ENCODE measurements at regions of chr11 and their contacts with region 1.

Region 1: DNA sequence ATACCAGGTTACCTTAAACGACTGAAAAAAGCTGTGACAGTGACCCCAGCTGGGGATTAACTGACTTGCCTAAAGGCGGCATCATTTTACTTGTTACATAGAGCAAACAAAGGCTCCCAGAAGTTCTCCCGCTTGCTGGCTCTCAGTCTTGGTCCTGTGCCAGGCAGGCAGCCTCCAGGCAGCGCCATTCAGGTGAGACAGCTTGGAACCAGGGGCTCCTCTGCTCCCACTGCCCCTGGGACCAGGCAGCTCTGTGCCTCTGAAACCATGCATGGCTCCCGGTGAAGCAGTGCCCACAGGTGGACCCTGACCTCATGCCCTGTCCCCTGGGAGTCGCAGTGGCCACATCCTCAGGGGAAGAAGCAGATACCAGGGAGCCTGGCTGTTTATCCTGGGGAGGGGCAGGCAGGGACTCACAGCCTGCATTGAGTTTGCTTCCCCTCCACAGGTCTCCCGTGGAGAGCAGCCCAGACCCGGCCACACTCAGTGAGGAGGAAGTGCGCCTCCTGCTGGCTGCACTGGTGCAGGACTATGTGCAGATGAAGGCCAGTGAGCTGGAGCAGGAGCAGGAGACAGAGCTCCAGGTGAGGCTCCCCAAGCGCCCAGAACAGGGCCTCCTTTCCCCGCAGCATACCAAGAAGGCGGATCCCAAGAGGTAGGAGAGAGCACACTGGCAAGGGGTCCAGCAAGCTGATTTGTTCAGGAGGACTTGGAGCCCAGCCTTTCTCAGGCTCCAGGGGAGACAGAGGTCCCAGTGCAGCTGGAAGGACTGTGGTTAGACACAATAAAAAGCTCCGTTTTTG is 15.6 kb upstream of the CYP2R1 start:
- DNase-seq: peak; percentile 48 to 87 (median 60)
- ATAC-seq: peak; percentile 99
- H3K4me3 ChIP-seq: no peak overlapping the region
- H3K27ac ChIP-seq: no peak overlapping the region; the same call in 2 of the 3 replicates
- H3K4me1 ChIP-seq: peaks cover 0 to 12% of the 10 kb centered on the region in 2 experiments; a peak in 3 of 5 replicates
- H3K27me3 ChIP-seq: no peaks in the 10 kb centered on the region
- CTCF ChIP-seq: peak; percentile 74 to 92 (median 80)
- EP300 ChIP-seq: no peak
- POLR2A ChIP-seq: no peak
- RAD21 ChIP-seq: peak; percentile 82 to 94

Region 2: DNA sequence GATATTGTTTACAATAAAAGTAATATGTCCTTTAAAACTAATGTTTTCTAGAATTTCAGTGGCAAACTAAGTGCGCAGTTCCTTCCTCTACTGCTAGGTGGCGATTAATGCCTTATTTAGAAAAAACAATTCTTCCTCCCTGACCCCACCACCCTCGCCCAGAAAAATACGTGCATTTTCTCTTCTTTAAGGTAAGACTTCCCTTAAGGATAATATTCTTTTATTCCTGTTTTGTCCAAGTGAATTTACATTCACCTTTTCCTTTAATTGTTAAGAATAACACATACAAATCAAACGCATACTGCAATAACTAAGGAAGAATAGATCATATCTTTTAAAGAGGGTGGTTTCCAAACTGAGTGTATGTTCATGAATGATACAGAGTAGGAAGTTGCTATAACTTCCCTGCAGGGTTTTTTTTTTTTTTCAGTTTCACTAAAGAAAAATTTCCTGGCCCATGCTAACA is 370.4 kb before region 1 on chr11:
- CTCF ChIA-PET with region 1: interaction called, 3 read pairs
- POLR2A ChIA-PET with region 1: no interaction called
- in situ Hi-C with region 1: no loop called
- intact Hi-C with region 1: loop called (anchors 1 kb)
- DNase-seq: peak; percentile 54 to 64 (median 61)
- ATAC-seq: peak; percentile 80
- H3K4me3 ChIP-seq: no peak overlapping the region
- H3K27ac ChIP-seq: peak overlapping the region; percentile 14; the same call in 1 of the 3 replicates
- H3K4me1 ChIP-seq: peaks cover 0 to 7% of the 10 kb centered on the region in 2 experiments; a peak in 3 of 5 replicates
- H3K27me3 ChIP-seq: no peaks in the 10 kb centered on the region
- CTCF ChIP-seq: peak; percentile 49 to 84 (median 72); a peak in 5 of 6 replicates
- EP300 ChIP-seq: no peak
- POLR2A ChIP-seq: no peak
- RAD21 ChIP-seq: peak; percentile 58 to 79

Region 3: GRCh38 chr11:14643697-14644225 is 263.9 kb before region 1 on chr11 and contains the start of gene PDE3B:
- CTCF ChIA-PET with region 1: no interaction called
- POLR2A ChIA-PET with region 1: interaction called, 3 read pairs
- in situ Hi-C with region 1: no loop called
- intact Hi-C with region 1: loop called (anchors 5 kb)
- DNase-seq: peak in 3 of 4 experiments; percentile 89 to 93 (median 93)
- ATAC-seq: peak; percentile 82
- H3K4me3 ChIP-seq: peak within 1 kb of the TSS; percentile 77
- H3K27ac ChIP-seq: peak within 1 kb of the TSS; percentile 92
- H3K4me1 ChIP-seq: peaks cover 16 to 21% of the 10 kb centered on the region in 2 experiments
- H3K27me3 ChIP-seq: no peaks in the 10 kb centered on the region
- CTCF ChIP-seq: peak in 2 of 3 experiments; percentile 31 to 42; a peak in 3 of 6 replicates
- EP300 ChIP-seq: peak; percentile 60; the same call in 1 of the 2 replicates
- POLR2A ChIP-seq: peak; percentile 87
- RAD21 ChIP-seq: peak in 1 of 2 experiments; percentile 30; a peak in 3 of 4 replicates
- polyA plus RNA-seq, gene PDE3B: 2.3 to 2.9 TPM

Region 4: GRCh38 chr11:15006139-15006759 is 98.6 kb after region 1 on chr11:
- CTCF ChIA-PET with region 1: interaction called, 5 read pairs
- POLR2A ChIA-PET with region 1: no interaction called
- in situ Hi-C with region 1: no loop called
- intact Hi-C with region 1: loop called (anchors 1 kb)
- DNase-seq: peak; percentile 19 to 59 (median 29)
- ATAC-seq: peak; percentile 95
- H3K4me3 ChIP-seq: no peak overlapping the region
- H3K27ac ChIP-seq: no peak overlapping the region
- H3K4me1 ChIP-seq: no peaks in the 10 kb centered on the region
- H3K27me3 ChIP-seq: no peaks in the 10 kb centered on the region
- CTCF ChIP-seq: peak; percentile 62 to 77 (median 66)
- EP300 ChIP-seq: no peak
- POLR2A ChIP-seq: no peak
- RAD21 ChIP-seq: peak; percentile 33 to 76; a peak in 3 of 4 replicates

Region 5: GRCh38 chr11:15208378-15209222 is 301.0 kb after region 1 on chr11:
- CTCF ChIA-PET with region 1: interaction called, 14 read pairs
- POLR2A ChIA-PET with region 1: no interaction called
- in situ Hi-C with region 1: no loop called
- intact Hi-C with region 1: loop called (anchors 1 kb)
- DNase-seq: peak; percentile 74 to 86 (median 84)
- ATAC-seq: peak; percentile 99
- H3K4me3 ChIP-seq: no peak overlapping the region
- H3K27ac ChIP-seq: no peak overlapping the region
- H3K4me1 ChIP-seq: no peaks in the 10 kb centered on the region
- H3K27me3 ChIP-seq: no peaks in the 10 kb centered on the region; a peak in 1 of 5 replicates
- CTCF ChIP-seq: peak; percentile 83 to 88 (median 86)
- EP300 ChIP-seq: no peak
- POLR2A ChIP-seq: no peak
- RAD21 ChIP-seq: peak; percentile 83 to 87